Endothelial cell of umbilical vein (primary cell): ENCODE measurements at regions of chr1 and their contacts with region 1.

Region 1: DNA sequence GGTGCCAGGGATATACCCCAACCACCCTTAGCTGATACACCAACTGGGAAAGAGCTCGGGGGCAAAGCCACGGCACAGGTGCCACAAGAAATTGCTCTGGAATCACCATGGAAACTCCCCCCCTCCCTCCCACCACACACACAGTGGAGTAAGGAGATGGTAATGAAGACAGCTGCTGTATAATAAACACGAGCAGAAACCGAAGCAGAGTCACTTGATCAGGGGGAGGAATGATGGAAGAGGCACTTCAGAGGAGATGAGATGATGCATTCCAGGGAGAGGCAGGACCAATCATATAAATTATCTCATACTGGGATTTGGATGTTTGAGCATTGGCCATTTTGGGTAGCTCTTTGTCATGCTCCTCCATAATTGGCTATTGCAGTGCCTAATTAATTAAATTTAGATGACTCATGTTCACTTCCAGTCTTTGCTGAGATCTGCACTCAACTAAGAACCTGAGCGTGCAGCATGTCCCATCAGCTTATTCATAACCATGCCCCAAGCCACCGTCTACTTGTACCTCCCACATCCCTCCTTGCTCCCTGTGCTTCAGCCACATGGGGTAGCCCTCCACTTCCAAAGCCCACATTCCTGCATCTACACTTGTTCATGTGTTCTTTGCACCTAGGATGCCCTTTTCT is 189.5 kb downstream of the ZSCAN20 start:
- DNase-seq: no peak
- H3K4me3 ChIP-seq: no peak overlapping the region
- H3K27ac ChIP-seq: no peak overlapping the region
- H3K4me1 ChIP-seq: no peaks in the 10 kb centered on the region
- H3K27me3 ChIP-seq: no peaks in the 10 kb centered on the region
- CTCF ChIP-seq: no peak
- POLR2A ChIP-seq: no peak

Region 2: DNA sequence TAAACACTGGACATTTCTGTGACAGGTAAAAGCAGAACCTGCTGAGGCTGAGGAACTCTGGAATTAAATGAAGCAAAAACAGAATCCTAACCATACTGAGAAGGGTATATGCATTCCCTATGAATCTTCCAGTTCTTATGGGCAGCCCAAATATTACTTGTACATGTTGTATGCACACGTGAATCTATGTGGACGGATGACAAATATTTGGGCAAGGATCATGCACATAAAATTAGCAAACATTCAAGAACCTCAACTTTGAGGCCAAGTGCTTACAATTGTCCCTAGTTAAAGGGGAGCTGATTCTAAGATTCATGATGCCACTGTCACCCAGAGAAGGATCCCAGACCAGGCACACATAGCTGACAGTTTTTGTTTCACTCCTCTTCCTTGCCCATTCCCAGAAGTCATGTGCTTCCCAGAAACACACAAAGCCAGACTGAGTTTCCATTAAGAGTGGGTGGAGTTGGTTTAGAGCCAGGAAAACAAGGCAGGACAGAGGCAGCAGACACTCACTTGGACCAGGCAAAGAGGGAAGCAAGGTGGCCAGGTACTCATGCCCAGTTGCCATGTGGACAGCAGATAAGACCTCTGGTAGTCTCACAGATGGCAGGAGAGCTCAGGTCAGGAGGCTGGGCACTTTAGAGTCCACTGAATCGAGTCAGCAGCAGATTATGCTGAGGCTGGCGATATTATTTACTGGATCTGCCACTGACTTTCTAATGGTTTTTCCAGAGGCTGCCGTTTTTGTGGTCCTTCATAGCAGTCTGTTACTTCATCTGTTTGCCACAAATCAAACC is 650.8 kb before region 1 on chr1:
- CTCF ChIA-PET with region 1: no interaction called
- POLR2A ChIA-PET with region 1: no interaction called
- dilution Hi-C with region 1: no loop called
- intact Hi-C with region 1: no loop called
- DNase-seq: peak; percentile 86
- H3K4me3 ChIP-seq: no peak overlapping the region
- H3K27ac ChIP-seq: no peak overlapping the region
- H3K4me1 ChIP-seq: peaks cover 13% of the 10 kb centered on the region
- H3K27me3 ChIP-seq: no peaks in the 10 kb centered on the region
- CTCF ChIP-seq: no peak
- POLR2A ChIP-seq: no peak

Region 3: GRCh38 chr1:33716976-33717688 is 55.2 kb after region 1 on chr1:
- CTCF ChIA-PET with region 1: no interaction called
- POLR2A ChIA-PET with region 1: interaction called, 16 read pairs
- dilution Hi-C with region 1: no loop called
- intact Hi-C with region 1: no loop called
- DNase-seq: no peak
- H3K4me3 ChIP-seq: no peak overlapping the region
- H3K27ac ChIP-seq: no peak overlapping the region
- H3K4me1 ChIP-seq: no peaks in the 10 kb centered on the region
- H3K27me3 ChIP-seq: no peaks in the 10 kb centered on the region
- CTCF ChIP-seq: no peak
- POLR2A ChIP-seq: no peak